A549 (cell line): ENCODE measurements at regions of chr16 and their contacts with region 1.

Region 1: GRCh38 chr16:30805370-30806169 is 18.6 kb upstream of the ZNF629 start:
- DNase-seq: peak; percentile 88 to 89
- ATAC-seq: peak; percentile 98
- H3K4me3 ChIP-seq: peak overlapping the region; percentile 74
- H3K27ac ChIP-seq: peak overlapping the region; percentile 91 to 96
- H3K4me1 ChIP-seq: peaks cover 8% of the 10 kb centered on the region; the same call in 1 of the 3 replicates
- CTCF ChIP-seq: no peak
- EP300 ChIP-seq: peak in 1 of 2 experiments; percentile 25; a peak in 1 of 5 replicates
- POLR2A ChIP-seq: peak; percentile 89
- RAD21 ChIP-seq: peak in 1 of 2 experiments; percentile 34; a peak in 1 of 5 replicates

Region 2: GRCh38 chr16:30775392-30776188 is 30.0 kb before region 1 on chr16:
- CTCF ChIA-PET with region 1: interaction called, 6 read pairs
- POLR2A ChIA-PET with region 1: interaction called, 10 read pairs
- DNase-seq: peak; percentile 88 to 96
- ATAC-seq: peak; percentile 80 to 89
- H3K4me3 ChIP-seq: peak overlapping the region; percentile 59
- H3K27ac ChIP-seq: peak overlapping the region; percentile 91 to 99
- H3K4me1 ChIP-seq: peaks cover 11% of the 10 kb centered on the region
- CTCF ChIP-seq: no peak
- EP300 ChIP-seq: no peak
- POLR2A ChIP-seq: peak; percentile 71
- RAD21 ChIP-seq: no peak

Region 3: GRCh38 chr16:30786936-30787612 is 18.5 kb before region 1 on chr16 and contains the start of gene ZNF629:
- CTCF ChIA-PET with region 1: interaction called, 35 read pairs
- POLR2A ChIA-PET with region 1: interaction called, 66 read pairs
- DNase-seq: peak; percentile 77
- ATAC-seq: peak; percentile 82 to 89
- H3K4me3 ChIP-seq: peak within 1 kb of the TSS; percentile 98
- H3K27ac ChIP-seq: peak within 1 kb of the TSS; percentile 97 to 99
- H3K4me1 ChIP-seq: peaks cover 17% of the 10 kb centered on the region
- CTCF ChIP-seq: no peak
- EP300 ChIP-seq: no peak
- POLR2A ChIP-seq: peak; percentile 34; the same call in 1 of the 2 replicates
- RAD21 ChIP-seq: peak in 1 of 2 experiments; percentile 21; a peak in 2 of 5 replicates
- polyA plus RNA-seq, gene ZNF629: 5.9 and 7.5 TPM in 2 replicates

Region 4: DNA sequence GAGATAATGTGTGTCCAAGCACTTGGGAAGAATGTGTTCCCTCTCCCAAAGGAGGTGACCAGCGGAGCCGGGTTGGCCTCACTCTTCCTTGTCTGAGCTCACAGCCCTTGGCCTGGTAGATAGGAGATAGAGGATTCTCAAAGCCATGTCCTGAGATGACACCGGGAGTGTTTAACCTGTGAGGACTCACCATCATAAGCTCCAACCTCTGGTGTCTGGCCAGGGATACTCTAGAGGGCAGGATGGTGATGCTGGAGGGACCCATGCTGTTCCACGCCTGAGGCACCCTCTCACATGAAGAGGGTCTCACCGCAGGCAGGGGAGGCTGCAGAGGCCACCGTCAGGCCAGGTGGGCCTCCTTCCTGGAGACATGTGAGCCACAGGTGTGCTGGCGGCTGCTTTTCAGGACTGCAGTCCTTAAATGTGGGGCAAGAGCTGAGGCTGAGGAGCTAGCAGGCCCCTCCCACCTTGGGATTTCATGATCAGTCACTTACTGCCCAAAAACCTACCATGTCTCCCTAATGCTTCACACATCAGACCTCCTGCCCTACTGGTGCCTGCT is 12.0 kb before region 1 on chr16:
- CTCF ChIA-PET with region 1: interaction called, 35 read pairs
- POLR2A ChIA-PET with region 1: interaction called, 6 read pairs
- DNase-seq: no peak
- ATAC-seq: peak; percentile 27 to 30; a peak in 3 of 6 replicates
- H3K4me3 ChIP-seq: no peak overlapping the region
- H3K27ac ChIP-seq: no peak overlapping the region
- H3K4me1 ChIP-seq: no peaks in the 10 kb centered on the region
- CTCF ChIP-seq: no peak
- EP300 ChIP-seq: no peak
- POLR2A ChIP-seq: no peak
- RAD21 ChIP-seq: no peak

Region 5: GRCh38 chr16:30874821-30875717 is 69.5 kb after region 1 on chr16:
- CTCF ChIA-PET with region 1: interaction called, 4 read pairs
- POLR2A ChIA-PET with region 1: interaction called, 26 read pairs
- DNase-seq: peak; percentile 82 to 93
- ATAC-seq: peak; percentile 95 to 98
- H3K4me3 ChIP-seq: peak overlapping the region; percentile 71
- H3K27ac ChIP-seq: peak overlapping the region; percentile 90 to 96
- H3K4me1 ChIP-seq: peaks cover 13% of the 10 kb centered on the region; the same call in 2 of the 3 replicates
- CTCF ChIP-seq: no peak
- EP300 ChIP-seq: no peak
- POLR2A ChIP-seq: peak; percentile 99
- RAD21 ChIP-seq: peak in 1 of 2 experiments; percentile 29; a peak in 1 of 5 replicates